ENCODE measurements at regions of chr17 and their contacts with region 1.

Region 1: GRCh38 chr17:75034236-75034908 is 12.4 kb downstream of the ATP5PD start:
- DNase-seq: peak; percentile 88
- ATAC-seq: peak; percentile 73 to 80

Region 2: DNA sequence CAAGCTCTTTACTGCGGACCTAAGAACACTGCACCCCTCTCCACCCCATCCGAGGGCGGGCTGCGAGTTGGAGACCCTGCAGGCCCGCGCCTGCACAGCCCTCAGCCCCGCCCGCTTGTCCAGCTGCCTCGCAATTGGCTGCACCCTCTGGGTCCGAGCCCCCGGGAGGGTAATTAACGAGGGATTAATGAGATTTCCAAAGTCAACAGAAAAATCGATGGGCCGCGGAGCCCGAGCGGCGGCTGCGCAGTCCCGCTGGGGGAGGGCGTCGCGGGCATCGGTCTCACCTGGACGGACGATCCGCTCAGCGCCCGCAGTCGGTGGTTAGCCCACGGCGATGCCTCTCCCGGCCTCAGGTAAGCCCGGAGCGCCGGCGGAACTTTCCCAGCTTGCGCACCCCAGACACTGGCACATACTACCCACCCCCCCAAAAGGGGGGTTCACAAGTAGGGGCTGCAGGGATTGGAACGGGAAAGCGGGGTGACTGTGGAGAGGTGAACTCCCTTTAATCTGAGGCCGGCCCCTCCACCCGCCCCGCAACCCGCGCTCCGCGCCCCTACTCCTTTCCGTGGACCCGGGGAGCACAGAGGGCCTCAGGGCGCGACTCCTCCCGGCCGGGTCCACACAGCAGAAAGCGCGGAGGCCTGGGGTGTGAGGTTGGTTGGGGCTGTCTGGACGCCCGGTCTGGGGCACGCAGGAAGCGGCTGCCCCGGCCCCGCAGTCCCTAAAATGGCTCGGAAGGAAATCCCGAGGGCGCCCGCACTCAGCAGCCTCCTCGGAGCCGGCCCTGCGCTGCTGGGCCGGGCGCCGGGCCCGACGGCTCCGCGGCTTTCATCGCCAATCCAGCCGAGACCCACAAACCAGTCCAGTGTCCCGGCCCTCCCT is 98.5 kb before region 1 on chr17 and contains the start of gene OTOP3:
- intact Hi-C with region 1: no loop called
- DNase-seq: no peak
- ATAC-seq: no peak
- total RNA-seq, gene OTOP3: not detected

Region 3: DNA sequence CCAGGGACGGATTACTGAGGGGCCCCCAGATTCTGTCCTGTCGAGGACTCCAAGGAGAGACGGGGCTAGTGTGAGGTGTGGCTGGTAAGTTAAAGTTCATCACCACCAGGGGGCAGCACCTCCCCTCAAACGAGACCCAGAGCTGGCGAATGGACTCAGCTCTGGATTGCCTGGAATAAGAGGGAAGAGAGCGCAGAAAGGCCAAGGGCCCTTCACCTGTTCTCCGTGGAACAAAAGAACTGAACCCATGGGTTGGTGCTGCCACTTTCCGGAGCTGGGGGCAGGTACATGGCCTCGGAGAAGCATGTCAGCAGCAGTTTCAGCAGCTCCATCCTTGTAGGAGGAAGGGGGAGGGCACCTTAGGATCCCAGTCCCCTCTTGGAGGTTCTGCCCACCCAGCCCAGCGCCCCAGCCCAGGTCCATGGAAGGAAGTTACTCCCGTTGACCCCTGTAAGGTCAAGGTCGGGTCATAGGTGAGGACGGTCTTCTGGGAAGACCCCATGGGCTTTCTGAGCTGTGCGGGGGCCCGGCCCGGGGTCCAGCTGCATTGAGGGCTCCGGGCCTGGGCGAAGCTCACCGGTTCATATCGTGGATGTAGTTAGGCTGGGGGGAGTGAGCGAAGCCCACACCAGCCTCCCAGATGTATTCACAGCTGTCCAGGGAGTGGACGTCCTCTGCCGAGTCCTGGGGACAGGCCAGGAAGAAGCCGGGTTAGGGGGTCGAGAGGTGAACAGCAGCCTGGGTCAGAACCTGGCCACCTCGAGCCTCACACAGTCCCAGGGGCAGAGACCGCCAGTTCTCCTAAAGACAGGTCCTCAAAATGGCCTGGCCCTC is 72.5 kb before region 1 on chr17:
- intact Hi-C with region 1: no loop called
- DNase-seq: peak; percentile 91
- ATAC-seq: peak; percentile 86 to 91

Region 4: GRCh38 chr17:74981979-74982662 is 52.3 kb before region 1 on chr17:
- intact Hi-C with region 1: loop called in 1 of 2 experiments (anchors 5 kb)
- DNase-seq: peak; percentile 82
- ATAC-seq: peak; percentile 96

Region 5: DNA sequence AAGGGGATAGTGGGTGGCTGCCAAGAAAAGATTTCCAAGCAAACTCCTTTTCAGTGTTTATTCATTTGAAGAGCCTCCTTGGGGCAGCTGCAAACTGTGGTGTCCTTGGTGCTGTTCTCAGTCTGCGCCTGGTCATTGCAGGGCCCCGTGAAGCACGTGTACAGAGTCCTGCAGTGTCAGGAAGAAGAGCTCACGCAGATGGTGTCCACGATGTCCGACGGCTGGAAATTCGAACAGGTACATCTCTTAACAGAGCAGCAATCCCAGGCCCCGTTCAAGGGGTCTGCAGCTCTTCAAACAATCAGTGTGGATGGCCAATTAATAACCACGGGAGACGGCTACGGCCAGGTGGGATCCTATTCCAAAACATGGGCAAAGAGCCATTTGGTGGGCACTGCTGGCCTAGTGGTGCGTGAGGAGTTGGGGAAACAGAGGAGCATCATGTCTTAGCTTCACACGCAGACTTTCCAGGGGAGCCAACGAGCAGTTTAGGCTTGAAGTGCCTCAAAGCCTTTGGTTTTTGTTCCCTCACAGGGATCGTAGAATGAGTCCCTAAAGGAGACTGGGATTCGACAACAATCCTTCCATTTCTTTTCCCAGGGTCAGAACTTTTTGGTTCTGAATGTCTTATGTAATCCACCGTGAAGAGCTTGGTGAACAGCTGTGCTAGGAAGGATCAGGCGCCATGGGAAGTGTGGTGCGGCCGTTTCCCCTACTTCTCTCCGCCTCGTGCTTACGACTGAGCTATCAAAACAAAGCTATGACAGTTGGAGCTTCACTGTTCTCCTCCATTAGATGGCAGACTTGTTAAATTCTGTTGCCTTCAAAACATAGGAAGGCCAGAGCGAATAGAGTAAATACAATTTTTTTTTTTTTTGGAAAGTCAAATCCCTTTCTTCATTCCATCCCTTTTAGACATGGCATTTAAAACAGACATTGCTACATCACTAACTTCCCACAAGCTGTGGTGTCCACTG is 25.3 kb after region 1 on chr17:
- intact Hi-C with region 1: no loop called
- DNase-seq: no peak
- ATAC-seq: peak; percentile 82 to 85

Region 6: GRCh38 chr17:75069783-75070182 is 35.4 kb after region 1 on chr17:
- intact Hi-C with region 1: no loop called
- DNase-seq: no peak
- ATAC-seq: peak in 1 of 2 donors; percentile 21

Measured in left cardiac atrium (tissue), 4 donors.